CD4-positive, alpha-beta memory T cell (primary cell): ENCODE measurements at regions of chr19 and their contacts with region 1.

Region 1: DNA sequence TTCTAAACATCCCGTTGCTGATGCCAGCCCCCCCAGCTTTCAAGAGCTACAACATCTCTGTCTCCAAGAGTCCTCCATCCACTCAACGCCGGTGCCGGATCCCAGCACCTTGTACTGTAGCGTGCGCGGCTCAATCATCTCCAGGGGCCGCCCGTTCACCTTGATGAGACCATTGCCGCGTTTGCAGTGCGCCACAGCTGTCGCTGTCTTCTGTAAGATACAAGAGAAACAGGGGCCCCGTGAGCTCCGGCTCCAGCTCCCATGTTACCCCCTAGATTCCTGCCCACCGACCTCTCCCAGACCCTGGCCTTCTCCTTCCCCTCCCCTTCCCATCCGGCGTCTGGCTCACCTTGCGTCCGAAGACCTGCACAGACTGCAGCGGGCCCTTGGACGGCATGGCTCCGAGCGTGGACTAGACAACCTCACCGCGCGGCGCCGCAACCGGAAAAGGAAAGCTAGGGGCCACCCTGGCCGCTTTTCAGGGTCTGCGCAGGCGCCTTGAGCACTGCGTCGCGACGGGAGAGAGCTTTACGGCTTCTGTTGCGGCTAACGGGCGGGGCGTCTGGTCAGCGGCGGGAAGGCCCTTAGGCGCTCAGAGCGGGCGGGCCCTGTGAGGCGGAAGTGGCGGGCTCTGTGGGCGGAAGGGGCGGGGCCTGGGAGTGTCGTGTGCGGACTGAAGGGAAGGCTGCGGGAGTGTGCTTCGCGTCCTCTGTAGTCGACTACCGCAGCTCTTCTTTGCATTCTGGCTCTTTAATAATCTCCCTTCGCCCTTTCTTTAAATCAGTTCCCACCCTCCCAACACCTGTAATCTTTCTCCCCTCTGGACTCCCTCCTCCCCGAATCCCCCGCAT is at the start of gene RPS16:
- DNase-seq: peak; percentile 98 to 99 (median 99)
- H3K4me3 ChIP-seq: peak within 1 kb of the TSS; percentile 71 to 90
- H3K4me3 Mint-ChIP-seq: peak within 1 kb of the TSS; percentile 97 to 100 (median 100)
- H3K27ac ChIP-seq: peak within 1 kb of the TSS; percentile 90
- H3K27ac Mint-ChIP-seq: peak within 1 kb of the TSS; percentile 98 to 100 (median 99)
- H3K4me1 ChIP-seq: peaks cover 37% of the 10 kb centered on the region
- H3K4me1 Mint-ChIP-seq: peaks cover 31 to 62% (median 41%) of the 10 kb centered on the region in 4 donors
- H3K27me3 ChIP-seq: no peaks in the 10 kb centered on the region
- H3K27me3 Mint-ChIP-seq: peaks cover 0 to 1% of the 10 kb centered on the region in 2 donors
- total RNA-seq, gene RPS16: 4,061 to 4,227 TPM

Region 2: DNA sequence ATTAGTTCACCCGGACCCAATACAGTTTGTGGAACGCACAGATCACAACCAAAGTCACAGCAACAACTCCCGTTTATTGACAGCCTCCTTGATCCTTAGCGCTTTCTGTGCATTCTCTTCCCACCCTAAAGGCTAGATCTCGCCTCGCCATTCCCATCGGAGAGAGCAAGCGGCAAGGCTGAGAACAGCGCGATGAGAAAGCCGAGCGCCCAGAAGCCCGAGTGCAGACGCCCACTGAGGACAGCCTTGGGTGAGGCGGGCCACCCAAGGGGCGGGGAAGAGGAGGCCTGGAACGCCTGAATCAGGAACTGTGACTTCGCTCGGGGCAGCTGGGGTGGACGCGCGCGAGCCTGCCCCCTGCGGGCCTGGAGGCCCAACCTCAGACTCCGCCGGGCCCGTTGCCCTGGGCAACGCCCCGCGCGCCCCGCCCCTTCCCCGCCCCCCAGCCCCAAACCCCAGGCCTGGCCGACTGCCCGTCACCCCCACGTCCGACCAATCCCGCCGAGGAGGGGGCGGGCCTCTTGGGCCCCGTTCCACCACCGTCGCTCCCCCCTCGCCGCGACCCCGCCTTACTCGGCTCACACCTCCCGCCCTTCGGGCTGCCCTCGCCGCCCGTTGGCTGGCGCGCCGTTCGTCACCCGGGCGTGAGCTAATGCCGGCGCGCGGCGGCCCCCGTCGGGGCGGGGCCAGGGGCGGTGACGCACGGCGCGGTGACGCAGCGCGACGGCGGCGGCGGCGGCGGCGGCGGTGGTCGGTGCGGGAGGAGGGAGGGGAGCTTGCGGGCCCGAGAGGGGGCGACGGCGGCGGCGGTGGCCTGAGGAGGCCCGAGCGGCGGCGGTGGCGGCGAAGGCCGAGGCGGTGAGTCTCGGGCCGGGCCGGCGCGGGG is 93.8 kb before region 1 on chr19 and contains the start of gene SAMD4B:
- CTCF ChIA-PET with region 1: interaction called, 4 read pairs
- POLR2A ChIA-PET with region 1: interaction called, 29 read pairs
- intact Hi-C with region 1: loop called (anchors 1 kb)
- DNase-seq: peak; percentile 99 to 100 (median 99)
- H3K4me3 ChIP-seq: peak within 1 kb of the TSS; percentile 86 to 91
- H3K4me3 Mint-ChIP-seq: peak within 1 kb of the TSS; percentile 87 to 99 (median 94)
- H3K27ac ChIP-seq: peak within 1 kb of the TSS; percentile 78
- H3K27ac Mint-ChIP-seq: peak within 1 kb of the TSS; percentile 91 to 98 (median 95)
- H3K4me1 ChIP-seq: peaks cover 64% of the 10 kb centered on the region
- H3K4me1 Mint-ChIP-seq: peaks cover 50 to 77% (median 64%) of the 10 kb centered on the region in 4 donors
- H3K27me3 ChIP-seq: no peaks in the 10 kb centered on the region
- H3K27me3 Mint-ChIP-seq: no peaks in the 10 kb centered on the region
- total RNA-seq, gene SAMD4B: 65.0 to 79.6 TPM

Region 3: GRCh38 chr19:39397360-39398296 is 38.1 kb before region 1 on chr19:
- CTCF ChIA-PET with region 1: interaction called, 15 read pairs
- POLR2A ChIA-PET with region 1: interaction called, 53 read pairs
- intact Hi-C with region 1: no loop called
- DNase-seq: peak; percentile 90 to 91 (median 91)
- H3K4me3 ChIP-seq: peak overlapping the region in 1 of 2 donors; percentile 21
- H3K4me3 Mint-ChIP-seq: peak overlapping the region; percentile 57 to 70 (median 64)
- H3K27ac ChIP-seq: peak overlapping the region; percentile 72
- H3K27ac Mint-ChIP-seq: peak overlapping the region; percentile 94 to 100 (median 97)
- H3K4me1 ChIP-seq: peaks cover 58% of the 10 kb centered on the region
- H3K4me1 Mint-ChIP-seq: peaks cover 32 to 67% (median 53%) of the 10 kb centered on the region in 4 donors
- H3K27me3 ChIP-seq: no peaks in the 10 kb centered on the region
- H3K27me3 Mint-ChIP-seq: no peaks in the 10 kb centered on the region

Region 4: DNA sequence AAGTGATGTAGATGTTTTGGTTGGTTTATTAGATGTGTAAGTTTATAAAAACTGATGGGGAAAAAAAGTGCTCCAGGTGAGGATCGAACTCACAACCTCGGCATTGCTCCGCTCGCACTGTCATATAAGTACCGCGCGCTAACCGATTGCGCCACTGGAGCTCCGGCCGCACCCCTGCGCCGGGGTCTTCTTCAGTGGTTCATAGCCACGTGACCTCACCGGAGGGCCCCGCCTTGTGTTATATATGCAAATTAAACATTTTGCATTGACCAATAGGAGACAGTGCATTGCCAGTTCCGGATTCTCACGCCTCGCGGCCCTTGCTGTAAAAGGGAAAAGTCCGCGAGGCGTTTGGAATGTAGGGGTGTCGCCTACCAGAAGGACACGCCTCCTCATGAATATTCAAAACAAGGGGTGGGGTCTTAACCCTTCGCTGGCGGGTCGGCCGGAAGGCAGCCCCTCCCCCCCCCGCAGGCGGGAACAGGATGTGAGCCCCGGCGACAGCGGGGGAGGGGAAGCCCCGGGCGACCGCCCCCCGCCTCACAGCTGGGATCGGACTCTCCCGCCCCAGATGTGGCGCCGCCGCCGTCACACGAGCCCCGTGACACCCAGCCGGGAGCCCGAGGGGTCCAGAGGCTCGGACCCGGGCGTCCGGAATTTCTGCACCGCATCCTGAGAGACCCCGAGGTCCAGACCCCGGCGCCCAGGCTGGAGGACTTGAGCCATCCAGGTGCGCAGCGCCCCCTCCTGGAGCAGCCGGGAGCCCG is 23.4 kb before region 1 on chr19 and contains the start of gene PLEKHG2:
- CTCF ChIA-PET with region 1: interaction called, 15 read pairs
- POLR2A ChIA-PET with region 1: interaction called, 53 read pairs
- intact Hi-C with region 1: loop called (anchors 1 kb)
- DNase-seq: peak; percentile 97 to 99 (median 98)
- H3K4me3 ChIP-seq: peak within 1 kb of the TSS; percentile 69 to 74
- H3K4me3 Mint-ChIP-seq: peak within 1 kb of the TSS; percentile 76 to 98 (median 90)
- H3K27ac ChIP-seq: peak within 1 kb of the TSS; percentile 100
- H3K27ac Mint-ChIP-seq: peak within 1 kb of the TSS; percentile 94 to 100 (median 99)
- H3K4me1 ChIP-seq: peaks cover 32% of the 10 kb centered on the region
- H3K4me1 Mint-ChIP-seq: peaks cover 25 to 60% (median 34%) of the 10 kb centered on the region in 4 donors
- H3K27me3 ChIP-seq: no peaks in the 10 kb centered on the region
- H3K27me3 Mint-ChIP-seq: peaks cover 0 to 7% of the 10 kb centered on the region in 2 donors
- total RNA-seq, gene PLEKHG2: 12.1 to 17.0 TPM

Region 5: GRCh38 chr19:39480337-39481228 is 44.9 kb after region 1 on chr19 and contains the start of gene TIMM50:
- CTCF ChIA-PET with region 1: interaction called, 3 read pairs
- POLR2A ChIA-PET with region 1: interaction called, 18 read pairs
- intact Hi-C with region 1: no loop called
- DNase-seq: peak; percentile 93 to 96 (median 94)
- H3K4me3 ChIP-seq: peak within 1 kb of the TSS; percentile 83 to 93
- H3K4me3 Mint-ChIP-seq: peak within 1 kb of the TSS; percentile 90 to 96 (median 94)
- H3K27ac ChIP-seq: peak within 1 kb of the TSS; percentile 82
- H3K27ac Mint-ChIP-seq: peak within 1 kb of the TSS; percentile 92 to 98 (median 96)
- H3K4me1 ChIP-seq: peaks cover 17% of the 10 kb centered on the region
- H3K4me1 Mint-ChIP-seq: peaks cover 15 to 41% (median 25%) of the 10 kb centered on the region in 4 donors
- H3K27me3 ChIP-seq: no peaks in the 10 kb centered on the region
- H3K27me3 Mint-ChIP-seq: no peaks in the 10 kb centered on the region
- total RNA-seq, gene TIMM50: 47.2 to 49.6 TPM

Region 6: GRCh38 chr19:39494661-39495060 is 58.9 kb after region 1 on chr19:
- CTCF ChIA-PET with region 1: no interaction called
- POLR2A ChIA-PET with region 1: no interaction called
- intact Hi-C with region 1: no loop called
- DNase-seq: no peak
- H3K4me3 ChIP-seq: no peak overlapping the region
- H3K4me3 Mint-ChIP-seq: no peak overlapping the region
- H3K27ac ChIP-seq: no peak overlapping the region
- H3K27ac Mint-ChIP-seq: no peak overlapping the region
- H3K4me1 ChIP-seq: peaks cover 19% of the 10 kb centered on the region
- H3K4me1 Mint-ChIP-seq: peaks cover 10 to 17% (median 12%) of the 10 kb centered on the region in 4 donors
- H3K27me3 ChIP-seq: peaks cover 10% of the 10 kb centered on the region
- H3K27me3 Mint-ChIP-seq: peaks cover 17 to 22% of the 10 kb centered on the region in 2 donors

Region 7: GRCh38 chr19:39539519-39540332 is 104.0 kb after region 1 on chr19 and contains the start of gene EID2:
- CTCF ChIA-PET with region 1: interaction called, 56 read pairs
- POLR2A ChIA-PET with region 1: interaction called, 17 read pairs
- intact Hi-C with region 1: loop called (anchors 1 kb)
- DNase-seq: peak; percentile 91 to 93 (median 92)
- H3K4me3 ChIP-seq: peak within 1 kb of the TSS; percentile 43 to 81
- H3K4me3 Mint-ChIP-seq: peak within 1 kb of the TSS; percentile 95 to 99 (median 97)
- H3K27ac ChIP-seq: peak within 1 kb of the TSS; percentile 86
- H3K27ac Mint-ChIP-seq: peak within 1 kb of the TSS; percentile 91 to 100 (median 99)
- H3K4me1 ChIP-seq: peaks cover 45% of the 10 kb centered on the region
- H3K4me1 Mint-ChIP-seq: peaks cover 31 to 69% (median 50%) of the 10 kb centered on the region in 4 donors
- H3K27me3 ChIP-seq: no peaks in the 10 kb centered on the region
- H3K27me3 Mint-ChIP-seq: peaks cover 0 to 1% of the 10 kb centered on the region in 2 donors
- total RNA-seq, gene EID2: 22.0 to 22.8 TPM